Breast epithelium (tissue), 4 donors: ENCODE measurements at regions of chrX and their contacts with region 1.

Region 1: GRCh38 chrX:7635604-7636003 is 207.4 kb upstream of the VCX start:
- DNase-seq: no peak
- H3K4me3 ChIP-seq: no peak overlapping the region
- H3K27ac ChIP-seq: no peak overlapping the region
- H3K4me1 ChIP-seq: no peaks in the 10 kb centered on the region
- H3K27me3 ChIP-seq: no peaks in the 10 kb centered on the region
- CTCF ChIP-seq: no peak
- POLR2A ChIP-seq: no peak

Region 2: DNA sequence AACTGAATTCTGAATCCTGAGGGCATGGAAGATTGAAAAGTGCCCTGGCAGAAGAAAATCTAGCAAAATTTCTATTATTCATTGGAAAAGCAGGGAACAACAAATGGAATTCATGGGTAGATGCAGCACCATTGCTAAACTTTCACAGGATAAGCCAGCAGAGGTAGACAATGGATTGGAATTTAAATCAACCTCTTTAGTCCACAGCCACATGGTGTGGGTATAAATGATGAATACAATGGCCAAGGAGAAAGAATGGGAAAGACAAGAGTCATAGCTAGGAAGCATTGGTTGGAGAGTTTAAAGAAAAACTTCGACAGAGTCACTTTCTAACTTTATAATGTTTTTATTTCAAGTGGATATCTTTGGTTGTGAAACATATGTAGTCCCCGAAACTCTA is 154.9 kb before region 1 on chrX:
- intact Hi-C with region 1: loop called (anchors 5 kb)
- DNase-seq: no peak
- H3K4me3 ChIP-seq: no peak overlapping the region
- H3K27ac ChIP-seq: no peak overlapping the region
- H3K4me1 ChIP-seq: no peaks in the 10 kb centered on the region
- H3K27me3 ChIP-seq: no peaks in the 10 kb centered on the region
- CTCF ChIP-seq: no peak
- POLR2A ChIP-seq: no peak

Region 3: DNA sequence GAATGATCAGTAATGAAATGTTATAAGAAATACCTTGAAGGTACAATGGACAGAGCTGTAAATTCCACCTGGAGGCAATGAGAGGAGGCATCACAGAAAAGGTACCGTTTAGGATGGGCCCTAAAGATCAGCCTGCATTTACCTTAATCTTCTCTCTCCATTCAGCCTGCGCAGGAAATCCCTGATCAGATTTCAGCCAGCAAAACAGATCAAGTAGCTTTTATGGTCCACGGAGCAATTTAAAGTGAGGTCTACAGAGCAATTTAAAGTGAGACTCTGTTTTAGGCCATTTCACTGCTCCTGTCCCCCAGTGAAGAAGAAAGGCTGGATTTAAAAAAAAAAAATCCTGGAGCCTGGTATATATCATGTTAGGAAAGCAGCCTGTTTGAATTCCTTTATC is 12.2 kb after region 1 on chrX:
- intact Hi-C with region 1: loop called (anchors 1 kb)
- DNase-seq: no peak
- H3K4me3 ChIP-seq: no peak overlapping the region
- H3K27ac ChIP-seq: no peak overlapping the region
- H3K4me1 ChIP-seq: no peaks in the 10 kb centered on the region
- H3K27me3 ChIP-seq: no peaks in the 10 kb centered on the region
- CTCF ChIP-seq: no peak
- POLR2A ChIP-seq: no peak